Heart right ventricle (tissue), 16 donors: ENCODE measurements at regions of chr4 and their contacts with region 1.

Region 1: GRCh38 chr4:4488405-4489404 is 53.1 kb downstream of the STX18 start:
- DNase-seq: peak; percentile 20 to 63
- ATAC-seq: peak; percentile 75 to 90 (median 86)
- H3K4me3 ChIP-seq: no peak overlapping the region
- H3K27ac ChIP-seq: no peak overlapping the region
- H3K4me1 ChIP-seq: peaks cover 0 to 17% (median 7%) of the 10 kb centered on the region in 9 donors
- H3K27me3 ChIP-seq: no peaks in the 10 kb centered on the region
- CTCF ChIP-seq: peak; percentile 75 to 93 (median 91)

Region 2: DNA sequence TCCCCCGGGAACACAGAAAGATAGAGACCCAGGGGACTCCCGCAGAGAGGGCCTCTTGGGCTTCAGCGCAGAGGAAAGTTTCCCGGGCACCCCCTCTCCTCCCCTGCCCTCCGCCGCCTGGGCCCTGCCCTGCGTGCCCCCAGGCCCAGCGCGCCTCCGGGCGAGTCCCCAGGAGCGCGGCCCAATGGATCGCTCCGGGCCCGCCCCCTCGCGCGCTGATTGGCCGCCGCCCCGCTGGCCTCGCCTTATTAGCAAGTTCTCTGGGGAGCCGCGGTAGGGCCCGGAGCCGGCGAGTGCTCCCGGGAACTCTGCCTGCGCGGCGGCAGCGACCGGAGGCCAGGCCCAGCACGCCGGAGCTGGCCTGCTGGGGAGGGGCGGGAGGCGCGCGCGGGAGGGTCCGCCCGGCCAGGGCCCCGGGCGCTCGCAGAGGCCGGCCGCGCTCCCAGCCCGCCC is 370.7 kb after region 1 on chr4 and contains the start of gene MSX1:
- intact Hi-C with region 1: loop called in 4 of 10 experiments (anchors 10 kb)
- DNase-seq: peak; percentile 89 to 90
- ATAC-seq: peak; percentile 92 to 97 (median 94)
- H3K4me3 ChIP-seq: peak within 1 kb of the TSS; percentile 60 to 87 (median 80)
- H3K27ac ChIP-seq: peak within 1 kb of the TSS; percentile 56 to 92 (median 88)
- H3K4me1 ChIP-seq: peaks cover 4 to 66% (median 47%) of the 10 kb centered on the region in 9 donors
- H3K27me3 ChIP-seq: peaks cover 52 to 100% (median 97%) of the 10 kb centered on the region in 7 donors
- CTCF ChIP-seq: no peak
- total RNA-seq, gene MSX1: 1.9 to 6.7 (median 4.0) TPM

Region 3: DNA sequence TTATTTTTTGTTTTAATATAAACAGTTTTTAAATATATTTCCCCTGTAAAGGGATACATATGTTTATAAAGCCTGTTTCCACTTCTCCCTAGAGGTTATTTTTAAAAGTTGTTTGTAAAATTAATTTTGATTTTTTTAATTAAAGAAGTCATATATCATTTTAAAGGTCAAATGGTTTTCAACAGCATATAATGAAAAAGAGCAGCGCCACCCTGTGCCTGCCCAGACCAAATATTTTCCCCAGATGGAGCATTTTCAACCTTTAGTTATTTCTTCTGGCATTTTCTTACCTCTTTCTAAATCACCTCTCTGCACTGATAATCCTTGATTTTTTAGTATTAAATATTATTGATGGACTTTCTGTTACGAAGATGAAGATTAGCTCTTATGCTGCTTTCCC is 391.8 kb after region 1 on chr4:
- intact Hi-C with region 1: loop called in 5 of 10 experiments (anchors 2 to 10 kb)
- DNase-seq: no peak
- ATAC-seq: no peak
- H3K4me3 ChIP-seq: no peak overlapping the region
- H3K27ac ChIP-seq: no peak overlapping the region
- H3K4me1 ChIP-seq: no peaks in the 10 kb centered on the region
- H3K27me3 ChIP-seq: peaks cover 0 to 86% (median 72%) of the 10 kb centered on the region in 7 donors
- CTCF ChIP-seq: peak in 6 of 9 donors; percentile 21 to 51 (median 37)

Region 4: DNA sequence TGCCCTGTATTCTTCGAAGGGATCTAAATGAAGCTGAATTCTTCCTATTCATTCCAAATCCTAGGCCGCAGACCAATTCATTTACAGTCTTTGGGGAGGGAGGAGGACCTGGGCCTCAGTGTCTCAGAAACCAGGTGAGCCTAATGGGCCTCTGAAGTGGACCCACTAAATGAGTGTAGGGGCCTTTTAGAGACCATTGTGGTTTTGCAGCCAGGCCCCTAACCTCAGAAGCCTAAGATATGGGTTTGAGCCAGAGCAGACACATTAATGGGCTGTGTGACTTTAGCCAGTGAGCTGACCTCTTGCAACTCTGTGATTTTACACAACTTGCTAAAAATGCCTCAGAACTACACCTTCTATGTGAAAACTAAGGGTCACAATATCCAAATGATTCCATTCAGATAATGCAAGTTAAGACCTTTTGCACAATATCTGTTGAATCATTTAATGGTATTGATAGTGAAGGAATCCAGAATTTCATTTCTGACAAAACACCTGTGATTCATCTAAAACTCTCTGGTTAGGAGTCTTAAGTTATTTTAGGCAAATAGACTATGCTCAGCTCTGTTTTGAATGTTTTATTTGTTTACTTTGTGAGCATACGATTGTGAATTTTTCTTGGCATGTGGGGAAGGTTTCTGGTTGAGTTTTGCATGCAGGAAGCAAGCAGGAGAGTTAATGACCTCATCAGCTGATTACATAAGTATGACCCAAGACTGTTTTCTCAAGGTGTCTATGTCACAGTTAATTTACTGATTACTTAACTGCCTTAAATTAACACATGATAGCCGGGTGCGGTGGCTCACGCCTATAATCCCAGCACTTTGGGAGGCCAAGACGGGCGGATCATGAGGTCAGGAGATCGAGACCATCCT is 1297.3 kb after region 1 on chr4:
- intact Hi-C with region 1: loop called in 1 of 10 experiments (anchors 10 kb)
- DNase-seq: no peak
- ATAC-seq: peak in 6 of 8 donors; percentile 37 to 55 (median 48)
- H3K4me3 ChIP-seq: no peak overlapping the region
- H3K27ac ChIP-seq: peak overlapping the region in 5 of 10 donors; percentile 15 to 61 (median 19)
- H3K4me1 ChIP-seq: peaks cover 0 to 7% (median 0%) of the 10 kb centered on the region in 9 donors
- H3K27me3 ChIP-seq: no peaks in the 10 kb centered on the region
- CTCF ChIP-seq: no peak